Dorsolateral prefrontal cortex (tissue), 120 donors: ENCODE measurements at regions of chr2 and their contacts with region 1.

Region 1: GRCh38 chr2:55519938-55520885 is 694 bp downstream of the CFAP36 start:
- DNase-seq: peak in 4 of 10 donors; percentile 24 to 46 (median 34)
- H3K4me3 ChIP-seq: peak overlapping the region; percentile 62 to 99 (median 86)
- H3K27ac ChIP-seq: peak overlapping the region in 58 of 59 donors; percentile 28 to 97 (median 91)
- H3K27me3 ChIP-seq: no peaks in the 10 kb centered on the region
- CTCF ChIP-seq: no peak

Region 2: GRCh38 chr2:55302241-55302640 is 218.0 kb before region 1 on chr2:
- intact Hi-C with region 1: no loop called
- DNase-seq: no peak
- H3K4me3 ChIP-seq: no peak overlapping the region
- H3K27ac ChIP-seq: peak overlapping the region in 16 of 59 donors; percentile 1 to 41 (median 21)
- H3K27me3 ChIP-seq: no peaks in the 10 kb centered on the region
- CTCF ChIP-seq: no peak

Region 3: GRCh38 chr2:55419679-55420438 is 100.4 kb before region 1 on chr2 and contains the start of gene CCDC88A:
- intact Hi-C with region 1: loop called in 1 of 2 experiments (anchors 5 kb)
- DNase-seq: peak; percentile 89 to 97 (median 93)
- H3K4me3 ChIP-seq: peak within 1 kb of the TSS; percentile 70 to 96 (median 88)
- H3K27ac ChIP-seq: peak within 1 kb of the TSS; percentile 86 to 99 (median 98)
- H3K27me3 ChIP-seq: no peaks in the 10 kb centered on the region
- CTCF ChIP-seq: peak in 46 of 56 donors; percentile 11 to 65 (median 38)
- total RNA-seq, gene CCDC88A: 151 to 514 (median 261) TPM

Region 4: GRCh38 chr2:55431982-55432627 is 88.1 kb before region 1 on chr2:
- intact Hi-C with region 1: loop called in 1 of 2 experiments (anchors 10 kb)
- DNase-seq: no peak
- H3K4me3 ChIP-seq: peak overlapping the region in 1 of 59 donors; percentile 5
- H3K27ac ChIP-seq: peak overlapping the region in 12 of 59 donors; percentile 2 to 67 (median 33)
- H3K27me3 ChIP-seq: no peaks in the 10 kb centered on the region
- CTCF ChIP-seq: peak; percentile 42 to 87 (median 70)

Region 5: GRCh38 chr2:55617175-55618024 is 97.2 kb after region 1 on chr2 and contains the start of gene PPP4R3B:
- intact Hi-C with region 1: loop called (anchors 5 kb)
- DNase-seq: peak; percentile 95 to 99 (median 98)
- H3K4me3 ChIP-seq: peak within 1 kb of the TSS; percentile 63 to 100 (median 96)
- H3K27ac ChIP-seq: peak within 1 kb of the TSS; percentile 86 to 100 (median 96)
- H3K27me3 ChIP-seq: no peaks in the 10 kb centered on the region
- CTCF ChIP-seq: peak in 54 of 56 donors; percentile 13 to 75 (median 56)
- total RNA-seq, gene PPP4R3B: 46.1 to 75.8 (median 59.3) TPM